ENCODE measurements at regions of chr2 and their contacts with region 1.

Region 1: DNA sequence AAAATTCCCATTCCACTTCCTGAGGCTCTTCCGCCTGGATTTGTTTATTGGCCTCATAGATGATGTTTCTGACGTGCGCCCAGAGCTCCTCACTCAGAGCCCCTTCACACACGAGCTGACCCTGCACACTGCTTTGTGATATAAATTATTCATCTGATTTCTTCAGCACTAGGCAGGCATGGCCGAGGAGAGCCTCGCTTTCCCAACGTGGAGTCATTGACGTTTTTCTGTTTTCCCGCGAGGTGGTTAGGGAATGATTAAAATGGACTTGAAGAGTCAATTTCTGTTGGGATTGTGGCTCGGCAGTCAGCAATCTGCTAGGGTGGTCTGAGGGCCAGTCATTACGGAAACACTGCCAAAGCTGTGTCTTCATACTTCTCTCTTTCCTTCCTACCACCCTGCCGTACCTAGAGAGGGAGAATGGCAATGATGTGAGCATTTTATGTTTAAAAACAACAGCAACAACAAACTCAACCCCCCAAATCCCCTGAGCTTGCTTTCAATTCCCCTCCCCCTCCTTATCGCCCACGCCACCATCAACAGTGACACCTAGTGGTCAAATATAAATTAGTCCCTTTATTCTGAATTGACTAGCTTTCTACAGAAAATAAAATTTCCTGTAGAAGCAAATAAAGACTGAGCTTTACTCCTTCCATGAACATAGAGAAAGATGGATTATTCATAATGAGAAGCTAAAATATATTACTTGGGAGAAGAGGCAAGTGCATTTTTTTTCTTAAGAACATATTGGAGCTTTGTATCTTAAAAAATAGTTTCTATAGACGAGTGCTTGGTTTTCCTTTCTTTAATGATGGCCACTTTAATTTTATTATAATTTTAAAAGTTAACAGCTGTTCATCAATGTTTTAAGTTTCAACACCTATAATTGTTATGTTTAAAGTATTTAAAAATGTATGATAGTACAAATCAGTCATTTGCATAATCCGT is 285.1 kb downstream of the MTX2 start:
- DNase-seq: peak; percentile 50
- ATAC-seq: peak; percentile 39
- H3K4me3 Mint-ChIP-seq: peak overlapping the region; percentile 59
- H3K27ac Mint-ChIP-seq: no peak overlapping the region
- H3K4me1 Mint-ChIP-seq: peaks cover 13% of the 10 kb centered on the region
- H3K27me3 Mint-ChIP-seq: peaks cover 58% of the 10 kb centered on the region

Region 2: DNA sequence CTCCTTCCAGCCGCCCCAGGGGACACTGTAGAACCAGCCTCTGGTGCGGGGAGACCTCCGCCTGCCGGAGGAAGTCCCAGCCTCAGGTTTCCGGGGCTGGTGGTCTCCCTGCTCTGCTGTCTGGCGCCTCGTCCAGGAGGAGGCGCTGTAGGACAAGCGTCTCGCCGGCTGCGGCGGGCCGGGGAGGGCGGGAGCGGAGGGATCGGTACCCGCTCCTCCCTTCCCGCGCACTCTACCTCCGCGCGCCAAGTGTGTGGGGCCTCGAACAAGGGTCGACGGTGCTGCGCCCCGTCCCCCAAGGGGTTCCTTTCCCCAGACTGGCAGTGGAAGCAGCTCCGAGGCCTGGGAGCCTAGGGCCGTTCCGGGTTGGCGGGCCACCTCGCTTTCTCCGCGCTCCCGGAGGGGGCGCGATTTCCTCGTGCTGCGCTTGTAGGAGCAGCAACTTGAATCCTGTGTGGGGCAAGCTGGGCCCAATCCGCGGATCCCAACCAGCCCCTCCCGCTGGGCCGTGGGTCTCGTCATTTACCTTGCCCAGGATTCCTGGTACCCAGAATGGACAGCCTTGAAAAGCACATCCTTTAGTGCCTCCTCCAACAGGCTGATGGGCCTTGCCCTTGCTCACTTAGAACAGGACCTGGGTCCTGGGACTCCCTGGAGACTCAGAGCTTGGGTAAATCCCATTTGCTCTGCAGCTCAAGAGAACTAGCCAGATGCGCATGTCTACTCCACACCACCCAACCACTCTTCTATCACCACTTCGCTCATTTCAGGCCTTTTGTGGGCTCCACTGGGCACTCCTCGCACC is 413.7 kb before region 1 on chr2:
- CTCF ChIA-PET with region 1: interaction called, 27 read pairs
- DNase-seq: peak; percentile 80
- ATAC-seq: peak; percentile 94
- H3K4me3 Mint-ChIP-seq: peak overlapping the region; percentile 26
- H3K27ac Mint-ChIP-seq: no peak overlapping the region
- H3K4me1 Mint-ChIP-seq: peaks cover 13% of the 10 kb centered on the region
- H3K27me3 Mint-ChIP-seq: peaks cover 86% of the 10 kb centered on the region

Region 3: GRCh38 chr2:176496761-176497160 is 57.6 kb before region 1 on chr2:
- CTCF ChIA-PET with region 1: no interaction called
- DNase-seq: no peak
- ATAC-seq: no peak
- H3K4me3 Mint-ChIP-seq: no peak overlapping the region
- H3K27ac Mint-ChIP-seq: no peak overlapping the region
- H3K4me1 Mint-ChIP-seq: peaks cover 4% of the 10 kb centered on the region
- H3K27me3 Mint-ChIP-seq: peaks cover 59% of the 10 kb centered on the region

Region 4: DNA sequence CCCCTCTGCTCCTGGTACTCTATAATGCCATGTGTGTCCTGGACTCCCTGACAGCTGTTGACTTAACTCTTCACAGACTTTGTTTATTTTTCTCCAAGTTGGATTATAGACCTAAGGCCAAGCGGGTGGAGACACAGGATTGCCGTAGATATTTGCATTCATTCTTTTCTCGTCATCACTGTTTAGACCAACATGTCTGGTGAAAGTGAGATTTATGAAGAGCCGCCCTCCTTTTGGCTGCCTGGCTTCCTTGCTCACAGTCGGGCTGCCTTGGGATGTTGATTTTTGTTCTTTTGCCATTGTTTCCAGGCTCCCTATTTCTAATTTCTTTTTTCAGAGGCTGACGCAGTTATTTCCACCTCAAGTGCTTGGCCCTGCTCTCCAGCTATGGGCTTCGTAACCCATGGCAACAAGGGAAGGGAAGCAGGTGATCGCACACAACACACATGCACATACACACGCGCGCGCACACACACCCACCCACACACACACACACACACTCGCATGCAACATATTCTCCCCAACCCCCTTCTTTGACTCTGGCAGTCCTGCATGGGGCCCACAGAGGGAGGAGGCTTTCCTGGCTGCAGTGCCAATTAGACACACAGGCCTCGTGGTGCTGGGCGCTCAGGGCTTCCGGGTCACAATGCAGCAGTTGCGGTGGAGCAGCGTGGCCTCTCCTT is 11.4 kb after region 1 on chr2:
- CTCF ChIA-PET with region 1: interaction called, 13 read pairs
- DNase-seq: no peak
- ATAC-seq: no peak
- H3K4me3 Mint-ChIP-seq: no peak overlapping the region
- H3K27ac Mint-ChIP-seq: no peak overlapping the region
- H3K4me1 Mint-ChIP-seq: no peaks in the 10 kb centered on the region
- H3K27me3 Mint-ChIP-seq: peaks cover 68% of the 10 kb centered on the region

Region 5: DNA sequence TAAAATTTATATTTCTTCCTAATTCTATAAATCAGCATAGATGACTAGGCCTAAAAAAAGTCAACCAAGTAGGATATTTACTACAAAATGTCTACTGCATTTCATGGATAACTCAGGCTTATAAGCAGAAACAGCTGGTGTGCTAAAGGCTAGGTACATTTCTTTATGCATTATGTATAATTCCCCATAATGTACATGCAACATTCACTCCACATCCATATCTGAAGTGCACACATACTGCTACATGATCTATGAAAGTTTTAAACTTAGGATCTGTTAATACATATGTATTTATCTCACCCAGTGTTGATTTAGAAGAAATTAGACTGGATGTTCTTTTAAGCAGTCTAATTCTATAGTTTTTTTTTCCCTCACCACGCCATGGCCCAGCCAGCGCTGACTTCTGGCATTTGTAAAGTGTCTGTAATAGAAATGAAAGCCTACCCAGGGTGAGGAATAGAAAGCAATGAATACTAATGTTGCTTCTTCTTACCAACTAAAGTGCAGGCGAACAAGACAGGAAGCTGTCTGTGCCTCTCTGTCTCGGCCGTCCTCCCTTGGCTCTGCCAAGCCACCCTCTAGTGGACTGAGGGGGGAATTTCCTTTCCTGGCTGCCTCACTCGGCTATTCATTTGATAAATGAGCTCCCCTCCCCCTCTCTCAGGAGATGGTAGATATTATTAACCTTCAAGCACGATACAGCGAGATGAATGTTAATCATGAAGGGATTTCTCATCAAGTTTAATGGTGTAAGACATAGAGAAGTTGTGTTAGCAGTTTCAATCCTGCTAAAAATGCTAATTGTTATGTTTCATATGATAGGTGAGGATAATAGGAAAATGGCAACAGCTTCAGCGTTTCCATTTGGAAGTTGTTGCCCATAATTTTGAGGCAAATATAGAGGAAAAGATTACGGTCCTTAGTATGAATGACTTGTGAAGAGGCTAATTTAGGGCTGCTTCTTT is 99.4 kb after region 1 on chr2:
- CTCF ChIA-PET with region 1: interaction called, 16 read pairs
- DNase-seq: peak; percentile 63
- ATAC-seq: peak; percentile 48
- H3K4me3 Mint-ChIP-seq: no peak overlapping the region
- H3K27ac Mint-ChIP-seq: no peak overlapping the region
- H3K4me1 Mint-ChIP-seq: peaks cover 26% of the 10 kb centered on the region
- H3K27me3 Mint-ChIP-seq: peaks cover 74% of the 10 kb centered on the region